ENCODE measurements at regions of chr4 and their contacts with region 1.

Region 1: GRCh38 chr4:39134683-39135319 is 47.5 kb upstream of the WDR19 start:
- DNase-seq: no peak
- ATAC-seq: peak in 1 of 4 donors; percentile 23
- H3K4me3 ChIP-seq: no peak overlapping the region
- H3K27ac ChIP-seq: no peak overlapping the region
- H3K4me1 ChIP-seq: peaks cover 0 to 8% (median 1%) of the 10 kb centered on the region in 12 donors
- H3K27me3 ChIP-seq: no peaks in the 10 kb centered on the region
- CTCF ChIP-seq: no peak
- POLR2A ChIP-seq: no peak

Region 2: DNA sequence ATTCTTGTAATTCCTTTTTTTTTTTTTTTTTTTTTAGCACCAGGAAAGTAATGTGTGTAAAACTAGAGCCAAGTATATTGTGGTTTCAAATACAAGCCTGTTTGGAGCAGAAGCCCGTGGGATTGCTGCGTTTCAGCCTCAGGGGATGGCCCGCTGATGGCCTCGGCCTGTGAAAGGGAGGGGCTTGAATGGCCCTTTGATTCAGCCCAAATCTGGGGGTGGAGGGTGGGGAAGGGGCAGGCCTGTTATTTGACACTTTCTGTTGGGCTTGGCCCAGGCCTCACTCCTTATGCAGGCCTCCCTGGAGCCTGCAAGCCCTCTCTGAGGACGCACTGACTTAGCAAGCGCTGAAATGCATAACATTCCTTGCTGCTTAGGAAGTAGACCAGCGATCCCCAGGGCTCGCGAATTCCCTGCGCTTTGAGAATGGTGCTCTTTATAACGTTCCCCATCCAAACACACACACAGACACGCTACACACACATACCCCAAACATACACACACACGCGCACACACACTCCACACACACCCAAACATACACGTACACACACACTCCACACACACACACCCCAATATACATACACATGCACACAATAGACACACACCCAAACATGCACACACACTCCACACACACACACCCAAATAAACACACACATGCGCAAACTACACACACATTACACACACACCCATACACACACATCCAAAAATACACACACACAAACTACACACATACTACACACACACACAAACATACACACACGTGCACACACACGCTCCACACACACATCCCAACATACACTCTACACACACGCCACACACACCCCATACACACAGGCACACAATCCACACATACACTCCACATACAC is 381.6 kb before region 1 on chr4:
- intact Hi-C with region 1: loop called in 4 of 10 experiments (anchors 2 to 5 kb)
- DNase-seq: peak; percentile 85 to 92 (median 86)
- ATAC-seq: peak; percentile 95 to 98 (median 96)
- H3K4me3 ChIP-seq: peak overlapping the region in 4 of 12 donors; percentile 8 to 27 (median 23)
- H3K27ac ChIP-seq: peak overlapping the region in 9 of 12 donors; percentile 18 to 75 (median 57)
- H3K4me1 ChIP-seq: peaks cover 0 to 39% (median 4%) of the 10 kb centered on the region in 12 donors
- H3K27me3 ChIP-seq: no peaks in the 10 kb centered on the region
- CTCF ChIP-seq: no peak
- POLR2A ChIP-seq: peak in 1 of 2 donors; percentile 15

Region 3: GRCh38 chr4:38759113-38759789 is 375.6 kb before region 1 on chr4:
- intact Hi-C with region 1: loop called in 6 of 10 experiments (anchors 2 to 10 kb)
- DNase-seq: peak in 4 of 5 donors; percentile 61 to 69 (median 64)
- ATAC-seq: peak; percentile 63 to 91 (median 84)
- H3K4me3 ChIP-seq: no peak overlapping the region
- H3K27ac ChIP-seq: peak overlapping the region in 1 of 12 donors; percentile 25
- H3K4me1 ChIP-seq: peaks cover 0 to 44% (median 0%) of the 10 kb centered on the region in 12 donors
- H3K27me3 ChIP-seq: no peaks in the 10 kb centered on the region
- CTCF ChIP-seq: peak; percentile 60 to 81 (median 71)
- POLR2A ChIP-seq: no peak

Region 4: DNA sequence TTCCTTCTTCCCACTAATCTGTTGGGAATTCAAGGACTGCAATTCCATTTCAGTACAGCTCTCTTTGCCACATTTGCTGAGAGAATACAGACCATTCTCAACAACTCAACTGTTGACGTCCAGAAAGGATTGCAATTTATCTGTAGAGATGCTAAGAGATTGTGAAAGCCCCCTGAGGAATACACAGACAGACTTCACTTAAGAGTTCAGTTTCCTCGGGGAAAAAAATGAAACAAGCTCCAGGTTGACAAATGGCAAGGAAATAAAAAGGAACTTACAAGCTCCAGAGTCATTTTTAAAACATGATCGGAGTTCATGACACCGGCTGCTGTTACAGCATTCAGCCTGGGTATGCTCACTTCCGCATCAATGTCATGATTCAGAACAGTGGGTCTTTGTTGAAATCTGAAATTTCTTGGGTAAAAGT is 365.8 kb before region 1 on chr4:
- intact Hi-C with region 1: loop called in 2 of 10 experiments (anchors 5 to 10 kb)
- DNase-seq: no peak
- ATAC-seq: peak in 3 of 4 donors; percentile 49 to 72 (median 64)
- H3K4me3 ChIP-seq: no peak overlapping the region
- H3K27ac ChIP-seq: peak overlapping the region in 3 of 12 donors; percentile 4 to 72 (median 30)
- H3K4me1 ChIP-seq: peaks cover 0 to 21% (median 0%) of the 10 kb centered on the region in 12 donors
- H3K27me3 ChIP-seq: no peaks in the 10 kb centered on the region
- CTCF ChIP-seq: no peak
- POLR2A ChIP-seq: no peak

Region 5: DNA sequence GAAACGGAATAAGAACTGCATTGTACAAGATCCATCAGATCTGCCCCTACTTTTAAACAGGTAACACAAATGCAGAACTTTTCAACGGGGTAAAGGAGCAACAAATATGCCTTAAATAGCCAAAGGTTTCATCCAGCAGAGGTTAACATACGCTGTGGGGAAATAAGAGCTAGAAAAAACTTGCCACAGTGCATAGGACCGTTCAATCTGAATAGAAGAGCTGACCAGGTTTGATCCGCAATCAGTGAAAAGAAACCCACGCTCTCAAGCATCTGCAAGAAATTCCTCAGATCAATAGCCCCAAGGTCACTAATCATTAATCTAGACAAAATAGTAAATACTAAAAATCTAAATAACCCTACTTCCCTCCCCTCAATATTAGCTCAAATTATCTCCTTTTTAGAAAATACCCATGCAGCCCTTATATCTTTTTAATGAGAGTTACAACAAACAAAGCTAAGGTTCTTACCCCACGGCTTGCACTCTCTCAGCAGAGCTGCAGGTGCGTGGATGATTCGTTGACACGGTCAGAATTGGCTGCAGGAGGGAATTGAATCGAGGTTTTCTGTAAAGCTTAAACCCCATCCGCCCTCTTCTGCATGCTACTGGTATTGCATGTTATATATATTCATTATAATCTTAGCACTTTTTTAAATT is 352.2 kb before region 1 on chr4 and contains the start of gene TLR10:
- intact Hi-C with region 1: loop called in 1 of 10 experiments (anchors 10 kb)
- DNase-seq: peak in 2 of 5 donors; percentile 33 to 40
- ATAC-seq: peak in 3 of 4 donors; percentile 59 to 78 (median 71)
- H3K4me3 ChIP-seq: no peak within 1 kb of the TSS
- H3K27ac ChIP-seq: no peak within 1 kb of the TSS
- H3K4me1 ChIP-seq: peaks cover 0 to 16% (median 0%) of the 10 kb centered on the region in 12 donors
- H3K27me3 ChIP-seq: no peaks in the 10 kb centered on the region
- CTCF ChIP-seq: peak; percentile 65 to 83 (median 72)
- POLR2A ChIP-seq: no peak
- total RNA-seq, gene TLR10: 0.18 to 0.24 TPM in 2 of 9 donors, not detected in the others

Region 6: GRCh38 chr4:38902695-38903094 is 232.1 kb before region 1 on chr4:
- intact Hi-C with region 1: loop called (anchors 1 to 5 kb)
- DNase-seq: no peak
- ATAC-seq: peak in 2 of 4 donors; percentile 65 to 69
- H3K4me3 ChIP-seq: no peak overlapping the region
- H3K27ac ChIP-seq: no peak overlapping the region
- H3K4me1 ChIP-seq: peaks cover 0 to 20% (median 1%) of the 10 kb centered on the region in 12 donors
- H3K27me3 ChIP-seq: no peaks in the 10 kb centered on the region
- CTCF ChIP-seq: peak in 11 of 12 donors; percentile 11 to 56 (median 38)
- POLR2A ChIP-seq: no peak

Measured in heart left ventricle (tissue), 16 donors.